CD8-positive, alpha-beta T cell (primary cell): ENCODE measurements at regions of chr5 and their contacts with region 1.

Region 1: GRCh38 chr5:119411935-119412602 is 40.2 kb upstream of the HSD17B4 start:
- DNase-seq: peak in 8 of 9 experiments; percentile 27 to 85 (median 57)
- ATAC-seq: peak; percentile 88
- H3K4me3 ChIP-seq: peak overlapping the region; percentile 43 to 49
- H3K4me3 Mint-ChIP-seq: peak overlapping the region; percentile 86
- H3K27ac ChIP-seq: no peak overlapping the region
- H3K27ac Mint-ChIP-seq: peak overlapping the region; percentile 74
- H3K4me1 ChIP-seq: peaks cover 5% of the 10 kb centered on the region
- H3K4me1 Mint-ChIP-seq: peaks cover 16% of the 10 kb centered on the region
- H3K27me3 ChIP-seq: no peaks in the 10 kb centered on the region
- H3K27me3 Mint-ChIP-seq: no peaks in the 10 kb centered on the region
- CTCF ChIP-seq: peak; percentile 89

Region 2: GRCh38 chr5:118987988-118988865 is 423.8 kb before region 1 on chr5 and contains the start of gene DTWD2:
- CTCF ChIA-PET with region 1: interaction called, 82 read pairs
- POLR2A ChIA-PET with region 1: interaction called, 14 read pairs
- intact Hi-C with region 1: loop called (anchors 1 kb)
- DNase-seq: peak; percentile 86 to 96 (median 89)
- ATAC-seq: peak; percentile 91
- H3K4me3 ChIP-seq: peak within 1 kb of the TSS; percentile 57 to 77
- H3K4me3 Mint-ChIP-seq: peak within 1 kb of the TSS; percentile 86
- H3K27ac ChIP-seq: peak within 1 kb of the TSS; percentile 55 to 66
- H3K27ac Mint-ChIP-seq: peak within 1 kb of the TSS; percentile 85
- H3K4me1 ChIP-seq: peaks cover 11% of the 10 kb centered on the region
- H3K4me1 Mint-ChIP-seq: peaks cover 16% of the 10 kb centered on the region
- H3K27me3 ChIP-seq: no peaks in the 10 kb centered on the region
- H3K27me3 Mint-ChIP-seq: no peaks in the 10 kb centered on the region
- CTCF ChIP-seq: peak; percentile 99
- total RNA-seq, gene DTWD2: 1.6 to 1.9 TPM

Region 3: DNA sequence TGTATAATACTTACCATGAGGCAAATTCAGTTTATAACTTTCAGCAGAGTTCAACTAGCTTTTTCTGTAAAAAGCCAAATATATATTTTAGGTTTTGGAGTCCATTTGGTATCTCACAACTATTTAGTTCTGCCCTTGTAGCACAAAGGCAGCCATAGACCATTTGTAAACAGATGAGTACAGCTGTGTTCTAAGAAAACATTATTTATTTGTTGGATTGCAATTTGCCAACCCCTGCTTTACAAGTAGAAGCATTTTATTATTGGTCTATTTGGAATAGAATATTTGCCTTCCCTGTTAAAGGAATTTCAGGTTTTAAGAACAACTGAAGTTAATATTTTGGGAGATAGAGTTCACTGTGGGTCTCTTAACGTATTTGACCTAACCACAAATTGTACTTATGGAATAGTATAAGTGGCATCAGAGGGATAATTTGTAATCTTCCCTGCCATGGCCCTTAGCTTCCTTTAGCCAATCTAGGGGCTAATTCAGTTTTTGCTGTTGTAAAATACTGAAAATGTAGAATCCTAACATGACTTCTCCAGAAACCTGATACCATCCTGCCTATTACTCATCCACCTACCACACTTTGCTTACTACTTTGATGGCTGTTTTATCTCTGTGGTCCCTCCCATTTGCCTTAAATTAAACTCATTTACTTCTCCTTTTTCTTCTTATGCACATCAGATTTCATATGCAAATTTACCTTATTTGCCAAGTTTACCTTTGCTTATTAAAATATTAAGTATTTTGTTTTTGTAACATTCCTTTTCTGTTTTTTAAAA is 232.0 kb before region 1 on chr5:
- CTCF ChIA-PET with region 1: interaction called, 12 read pairs
- POLR2A ChIA-PET with region 1: no interaction called
- intact Hi-C with region 1: no loop called
- DNase-seq: no peak
- ATAC-seq: no peak
- H3K4me3 ChIP-seq: no peak overlapping the region
- H3K4me3 Mint-ChIP-seq: no peak overlapping the region
- H3K27ac ChIP-seq: no peak overlapping the region
- H3K27ac Mint-ChIP-seq: no peak overlapping the region
- H3K4me1 ChIP-seq: no peaks in the 10 kb centered on the region
- H3K4me1 Mint-ChIP-seq: peaks cover 1% of the 10 kb centered on the region
- H3K27me3 ChIP-seq: no peaks in the 10 kb centered on the region
- H3K27me3 Mint-ChIP-seq: no peaks in the 10 kb centered on the region
- CTCF ChIP-seq: no peak

Region 4: DNA sequence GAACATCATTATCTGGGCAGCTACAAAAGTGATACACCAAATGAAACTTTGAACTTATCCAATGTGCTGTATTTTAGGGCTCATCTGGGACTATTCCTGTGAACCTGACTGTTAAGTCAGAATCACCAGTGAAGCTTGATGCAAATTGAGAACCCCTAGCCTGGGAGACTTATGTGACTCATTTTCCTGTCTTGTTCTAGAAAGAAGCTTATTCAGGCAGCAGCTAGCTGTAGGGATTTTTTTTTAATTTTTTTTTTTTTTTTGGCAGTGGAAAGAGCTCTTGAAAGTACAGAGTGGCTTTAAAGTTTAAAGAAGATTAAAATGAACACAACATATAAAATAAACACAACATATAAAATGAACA is 137.3 kb before region 1 on chr5:
- CTCF ChIA-PET with region 1: interaction called, 33 read pairs
- POLR2A ChIA-PET with region 1: interaction called, 5 read pairs
- intact Hi-C with region 1: no loop called
- DNase-seq: peak in 4 of 9 experiments; percentile 30 to 76 (median 46)
- ATAC-seq: peak; percentile 52
- H3K4me3 ChIP-seq: peak overlapping the region in 1 of 2 experiments; percentile 96
- H3K4me3 Mint-ChIP-seq: peak overlapping the region; percentile 100
- H3K27ac ChIP-seq: peak overlapping the region; percentile 20 to 89
- H3K27ac Mint-ChIP-seq: peak overlapping the region; percentile 97
- H3K4me1 ChIP-seq: peaks cover 85% of the 10 kb centered on the region
- H3K4me1 Mint-ChIP-seq: peaks cover 96% of the 10 kb centered on the region
- H3K27me3 ChIP-seq: no peaks in the 10 kb centered on the region
- H3K27me3 Mint-ChIP-seq: no peaks in the 10 kb centered on the region
- CTCF ChIP-seq: no peak

Region 5: GRCh38 chr5:119328753-119329602 is 83.1 kb before region 1 on chr5:
- CTCF ChIA-PET with region 1: interaction called, 24 read pairs
- POLR2A ChIA-PET with region 1: no interaction called
- intact Hi-C with region 1: loop called (anchors 5 kb)
- DNase-seq: peak in 8 of 9 experiments; percentile 34 to 88 (median 74)
- ATAC-seq: peak; percentile 70
- H3K4me3 ChIP-seq: no peak overlapping the region
- H3K4me3 Mint-ChIP-seq: peak overlapping the region; percentile 47
- H3K27ac ChIP-seq: peak overlapping the region; percentile 39 to 80
- H3K27ac Mint-ChIP-seq: peak overlapping the region; percentile 95
- H3K4me1 ChIP-seq: peaks cover 95% of the 10 kb centered on the region
- H3K4me1 Mint-ChIP-seq: peaks cover 94% of the 10 kb centered on the region
- H3K27me3 ChIP-seq: no peaks in the 10 kb centered on the region
- H3K27me3 Mint-ChIP-seq: no peaks in the 10 kb centered on the region
- CTCF ChIP-seq: no peak

Region 6: DNA sequence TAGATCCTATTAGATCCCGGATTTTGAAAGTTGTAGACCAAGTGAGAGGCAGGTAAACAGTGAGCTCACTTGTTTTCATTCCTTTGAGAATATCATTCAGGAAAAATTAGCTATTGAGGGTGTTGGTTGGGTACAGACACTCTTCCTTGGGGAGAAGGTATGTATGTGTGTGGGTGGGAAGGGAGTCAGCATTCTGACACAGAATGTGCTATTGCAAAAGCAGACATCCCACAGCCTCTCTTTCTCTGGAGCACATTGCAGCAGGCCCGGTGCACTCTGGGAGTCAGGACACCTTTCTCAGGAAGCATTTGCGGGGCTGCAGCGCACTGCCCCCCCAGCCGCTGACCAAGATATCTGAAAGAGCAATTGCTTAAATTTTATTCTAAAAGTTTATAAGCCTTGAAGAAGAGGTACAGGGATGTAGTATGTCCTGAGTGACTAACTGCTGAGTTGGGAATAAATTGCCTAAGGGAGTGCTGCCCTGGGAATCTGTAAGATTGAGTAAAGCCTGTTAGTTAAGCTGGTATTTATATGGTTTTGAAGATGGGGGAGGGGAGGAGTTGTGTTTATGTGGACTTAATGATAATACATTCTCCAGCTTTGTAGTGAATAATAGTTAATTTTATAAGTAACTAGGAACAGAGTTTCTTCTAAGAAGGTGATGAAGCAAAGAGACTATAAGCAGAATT is 51.0 kb before region 1 on chr5:
- CTCF ChIA-PET with region 1: interaction called, 10 read pairs
- POLR2A ChIA-PET with region 1: interaction called, 3 read pairs
- intact Hi-C with region 1: no loop called
- DNase-seq: no peak
- ATAC-seq: no peak
- H3K4me3 ChIP-seq: no peak overlapping the region
- H3K4me3 Mint-ChIP-seq: peak overlapping the region; percentile 12
- H3K27ac ChIP-seq: peak overlapping the region in 1 of 2 experiments; percentile 48
- H3K27ac Mint-ChIP-seq: peak overlapping the region; percentile 95
- H3K4me1 ChIP-seq: peaks cover 90% of the 10 kb centered on the region
- H3K4me1 Mint-ChIP-seq: peaks cover 91% of the 10 kb centered on the region
- H3K27me3 ChIP-seq: no peaks in the 10 kb centered on the region
- H3K27me3 Mint-ChIP-seq: no peaks in the 10 kb centered on the region
- CTCF ChIP-seq: no peak

Region 7: DNA sequence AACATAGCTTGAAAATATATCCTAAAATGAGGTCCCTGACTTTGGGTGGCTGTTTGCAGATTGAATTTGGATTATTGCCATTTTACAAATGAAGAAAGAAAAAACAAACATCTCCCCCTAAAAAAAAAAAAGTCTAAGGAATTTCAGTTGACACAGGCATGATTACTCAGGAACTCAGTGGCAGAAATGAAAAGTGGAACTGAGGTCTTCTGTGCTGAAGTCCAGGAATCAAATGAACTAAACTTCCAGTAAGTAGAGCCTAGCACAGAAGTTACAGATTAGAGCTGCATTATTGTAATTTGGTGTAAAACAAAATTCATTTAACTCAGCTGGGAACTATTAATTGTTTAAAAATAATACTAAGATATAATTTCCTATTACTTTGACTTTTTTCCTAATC is 244.0 kb after region 1 on chr5:
- CTCF ChIA-PET with region 1: no interaction called
- POLR2A ChIA-PET with region 1: no interaction called
- intact Hi-C with region 1: no loop called
- DNase-seq: no peak
- ATAC-seq: no peak
- H3K4me3 ChIP-seq: no peak overlapping the region
- H3K4me3 Mint-ChIP-seq: no peak overlapping the region
- H3K27ac ChIP-seq: no peak overlapping the region
- H3K27ac Mint-ChIP-seq: no peak overlapping the region
- H3K4me1 ChIP-seq: no peaks in the 10 kb centered on the region
- H3K4me1 Mint-ChIP-seq: no peaks in the 10 kb centered on the region
- H3K27me3 ChIP-seq: no peaks in the 10 kb centered on the region
- H3K27me3 Mint-ChIP-seq: no peaks in the 10 kb centered on the region
- CTCF ChIP-seq: no peak

Region 8: GRCh38 chr5:119792161-119792799 is 380.2 kb after region 1 on chr5:
- CTCF ChIA-PET with region 1: no interaction called
- POLR2A ChIA-PET with region 1: no interaction called
- intact Hi-C with region 1: no loop called
- DNase-seq: no peak
- ATAC-seq: no peak
- H3K4me3 ChIP-seq: no peak overlapping the region
- H3K4me3 Mint-ChIP-seq: no peak overlapping the region
- H3K27ac ChIP-seq: no peak overlapping the region
- H3K27ac Mint-ChIP-seq: no peak overlapping the region
- H3K4me1 ChIP-seq: no peaks in the 10 kb centered on the region
- H3K4me1 Mint-ChIP-seq: peaks cover 2% of the 10 kb centered on the region
- H3K27me3 ChIP-seq: no peaks in the 10 kb centered on the region
- H3K27me3 Mint-ChIP-seq: no peaks in the 10 kb centered on the region
- CTCF ChIP-seq: no peak

Region 9: DNA sequence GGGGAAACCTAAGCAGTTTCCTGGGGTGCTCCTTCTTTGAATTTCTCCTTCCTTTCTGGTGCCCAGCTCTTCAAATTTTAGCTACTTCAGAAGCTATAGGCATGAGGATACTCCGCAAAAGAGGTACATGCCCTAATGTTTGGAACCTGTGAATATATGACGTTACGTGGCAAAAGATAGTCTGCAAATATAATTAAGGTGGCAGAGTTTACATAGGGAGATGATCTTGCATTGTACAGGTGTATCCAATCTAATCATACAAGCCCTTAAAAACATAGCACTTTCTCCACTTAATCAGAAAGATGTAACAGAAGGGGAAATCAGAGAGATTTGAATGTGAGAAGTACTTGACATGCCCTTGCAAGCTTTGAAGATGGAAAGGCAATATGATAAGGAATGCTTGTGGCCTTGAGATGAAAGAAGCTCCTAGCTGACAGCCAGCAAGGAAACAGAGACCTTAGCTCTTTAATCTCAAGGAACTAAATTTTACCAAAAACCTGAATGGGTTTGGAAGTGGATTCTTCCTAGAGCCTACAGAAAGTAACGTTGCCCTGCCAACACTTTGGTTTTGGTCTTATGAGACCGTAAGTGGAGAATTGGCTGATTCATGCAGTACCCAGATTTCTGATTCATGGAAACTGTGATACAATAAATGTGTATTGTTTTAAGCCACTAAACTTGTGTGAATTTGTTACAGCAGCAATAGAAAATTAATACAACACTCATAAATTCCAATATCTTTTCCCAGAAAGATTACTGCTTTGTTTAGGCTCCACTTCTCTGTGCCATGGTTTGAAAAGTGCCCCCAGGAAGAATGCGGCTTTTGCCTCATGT is 485.7 kb after region 1 on chr5:
- CTCF ChIA-PET with region 1: no interaction called
- POLR2A ChIA-PET with region 1: no interaction called
- intact Hi-C with region 1: no loop called
- DNase-seq: no peak
- ATAC-seq: no peak
- H3K4me3 ChIP-seq: no peak overlapping the region
- H3K4me3 Mint-ChIP-seq: no peak overlapping the region
- H3K27ac ChIP-seq: no peak overlapping the region
- H3K27ac Mint-ChIP-seq: no peak overlapping the region
- H3K4me1 ChIP-seq: no peaks in the 10 kb centered on the region
- H3K4me1 Mint-ChIP-seq: no peaks in the 10 kb centered on the region
- H3K27me3 ChIP-seq: no peaks in the 10 kb centered on the region
- H3K27me3 Mint-ChIP-seq: no peaks in the 10 kb centered on the region
- CTCF ChIP-seq: no peak

Region 10: DNA sequence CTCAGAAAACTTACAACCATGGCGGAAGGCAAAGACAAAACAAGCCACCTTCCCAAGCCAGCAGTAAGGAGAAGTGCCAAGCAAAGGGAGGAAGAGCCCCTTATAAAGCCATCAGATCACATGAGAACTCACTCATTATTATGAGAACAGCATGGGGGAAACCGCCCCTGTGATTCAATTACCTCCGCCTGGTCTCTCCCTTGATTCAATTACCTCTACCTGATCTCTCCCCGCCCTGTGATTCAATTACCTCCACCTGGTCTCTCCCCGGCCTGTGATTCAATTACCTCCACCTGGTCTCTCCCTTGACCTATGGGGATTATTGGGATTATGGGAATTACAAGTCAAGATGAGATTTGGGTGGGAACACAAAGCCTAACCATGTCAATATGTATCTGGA is 1972.3 kb after region 1 on chr5:
- CTCF ChIA-PET with region 1: no interaction called
- POLR2A ChIA-PET with region 1: no interaction called
- intact Hi-C with region 1: no loop called
- DNase-seq: no peak
- ATAC-seq: no peak
- H3K4me3 ChIP-seq: no peak overlapping the region
- H3K4me3 Mint-ChIP-seq: no peak overlapping the region
- H3K27ac ChIP-seq: no peak overlapping the region
- H3K27ac Mint-ChIP-seq: no peak overlapping the region
- H3K4me1 ChIP-seq: no peaks in the 10 kb centered on the region
- H3K4me1 Mint-ChIP-seq: no peaks in the 10 kb centered on the region
- H3K27me3 ChIP-seq: no peaks in the 10 kb centered on the region
- H3K27me3 Mint-ChIP-seq: no peaks in the 10 kb centered on the region
- CTCF ChIP-seq: no peak